ENCODE measurements at regions of chr15 and their contacts with region 1.

Region 1: DNA sequence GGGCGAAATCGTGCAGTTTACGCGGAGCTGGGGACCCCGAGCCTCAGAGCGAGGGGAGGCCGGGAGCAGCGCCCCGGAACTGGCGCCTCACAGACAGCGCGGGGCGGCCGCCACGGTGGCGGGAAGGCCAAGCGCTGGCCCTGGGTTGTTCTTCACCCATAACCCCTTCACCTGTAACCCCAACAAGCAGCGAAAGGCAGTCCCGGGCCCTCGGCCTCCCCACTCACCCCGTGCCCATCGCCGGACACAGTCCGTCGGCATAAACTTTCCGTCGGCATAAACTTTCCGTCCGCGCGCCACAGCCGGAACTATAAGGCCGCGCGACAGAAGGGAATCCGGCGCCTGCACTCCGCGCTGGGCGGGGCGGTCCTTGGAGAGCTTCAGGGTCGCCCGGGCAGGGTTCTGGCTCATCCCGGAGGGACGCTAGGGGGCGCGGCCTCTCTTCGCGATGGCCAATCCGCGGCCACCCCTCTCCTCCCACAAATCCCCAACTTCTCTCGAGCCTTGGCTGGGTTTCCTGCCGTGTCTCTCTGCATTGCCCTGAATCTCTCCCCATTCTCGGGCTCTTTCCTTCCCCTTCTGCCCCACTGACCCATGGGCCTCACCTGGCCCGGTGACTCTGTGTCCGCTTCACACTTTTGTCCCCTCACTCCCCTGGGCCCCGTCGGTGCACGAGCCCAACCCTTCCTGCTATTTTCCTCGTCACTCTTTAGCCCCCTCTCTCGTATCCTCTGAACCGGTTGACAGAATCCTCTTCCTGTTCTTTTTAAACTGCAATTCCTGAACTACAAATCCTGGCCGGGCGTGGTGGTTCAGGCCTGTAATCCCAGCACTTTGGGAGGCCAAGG is at the start of gene INTS14:
- DNase-seq: peak; percentile 100
- H3K4me3 ChIP-seq: peak within 1 kb of the TSS; percentile 89
- H3K4me1 ChIP-seq: peaks cover 14% of the 10 kb centered on the region
- H3K27me3 ChIP-seq: no peaks in the 10 kb centered on the region

Region 2: GRCh38 chr15:65318870-65319356 is 292.2 kb before region 1 on chr15:
- in situ Hi-C with region 1: loop called (anchors 10 kb)
- DNase-seq: peak; percentile 94 to 95
- H3K4me3 ChIP-seq: no peak overlapping the region
- H3K4me1 ChIP-seq: no peaks in the 10 kb centered on the region
- H3K27me3 ChIP-seq: no peaks in the 10 kb centered on the region

Measured in HAP-1 (cell line).